Ascending aorta (tissue), 2 donors: ENCODE measurements at regions of chr3 and their contacts with region 1.

Region 1: GRCh38 chr3:139561959-139562676 is 22.6 kb upstream of the RBP1 start:
- DNase-seq: no peak
- H3K4me3 ChIP-seq: no peak overlapping the region
- H3K27ac ChIP-seq: no peak overlapping the region
- H3K4me1 ChIP-seq: no peaks in the 10 kb centered on the region
- H3K27me3 ChIP-seq: no peaks in the 10 kb centered on the region
- CTCF ChIP-seq: peak; percentile 52 to 69 (median 53)

Region 2: DNA sequence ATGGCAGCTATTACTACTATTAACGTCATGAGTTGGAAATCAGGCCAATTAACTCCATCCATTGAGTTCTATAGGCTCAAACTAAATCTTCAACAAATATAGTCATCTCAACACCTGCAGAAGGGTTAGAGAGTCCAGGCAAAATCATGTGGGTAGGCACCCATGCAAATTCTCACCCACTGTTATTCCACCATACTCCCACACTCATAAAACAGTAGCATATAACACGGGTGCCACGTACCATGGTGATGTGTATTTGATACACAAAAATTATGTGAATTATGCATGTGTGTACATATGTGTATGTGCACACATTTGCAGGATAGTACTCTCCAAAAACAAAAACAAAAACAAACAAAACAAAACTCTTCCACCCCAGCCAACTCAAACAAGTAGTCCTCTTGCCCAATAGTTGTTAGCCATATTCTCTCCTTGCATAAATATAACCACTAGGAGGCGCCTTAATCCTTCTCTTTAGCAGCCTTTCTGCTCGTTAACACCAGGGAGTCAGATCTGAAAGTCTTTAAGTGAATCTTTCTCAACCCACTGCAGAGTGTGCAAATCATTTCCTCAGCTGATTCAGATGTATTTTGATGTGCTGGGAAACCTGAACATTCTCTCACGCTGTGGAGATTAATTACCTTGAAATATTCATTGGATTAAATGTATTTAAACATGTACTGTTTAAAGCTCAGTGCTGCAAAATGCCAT is 134.7 kb before region 1 on chr3:
- intact Hi-C with region 1: loop called (anchors 1 kb)
- DNase-seq: no peak
- H3K4me3 ChIP-seq: no peak overlapping the region
- H3K27ac ChIP-seq: no peak overlapping the region
- H3K4me1 ChIP-seq: no peaks in the 10 kb centered on the region
- H3K27me3 ChIP-seq: no peaks in the 10 kb centered on the region
- CTCF ChIP-seq: peak; percentile 54 to 81 (median 66)

Region 3: GRCh38 chr3:139519998-139520737 is 42.0 kb before region 1 on chr3:
- intact Hi-C with region 1: loop called (anchors 2 kb)
- DNase-seq: no peak
- H3K4me3 ChIP-seq: no peak overlapping the region
- H3K27ac ChIP-seq: no peak overlapping the region
- H3K4me1 ChIP-seq: no peaks in the 10 kb centered on the region
- H3K27me3 ChIP-seq: no peaks in the 10 kb centered on the region
- CTCF ChIP-seq: peak; percentile 5 to 21 (median 15)